CD4-positive, alpha-beta memory T cell (primary cell): ENCODE measurements at regions of chr11 and their contacts with region 1.

Region 1: GRCh38 chr11:86291466-86292262 is 10.4 kb upstream of the HIKESHI start:
- DNase-seq: peak; percentile 49 to 62 (median 55)
- H3K4me3 ChIP-seq: no peak overlapping the region
- H3K4me3 Mint-ChIP-seq: no peak overlapping the region
- H3K27ac ChIP-seq: no peak overlapping the region
- H3K27ac Mint-ChIP-seq: peak overlapping the region in 6 of 7 donors; percentile 1 to 78 (median 50)
- H3K4me1 ChIP-seq: peaks cover 60% of the 10 kb centered on the region
- H3K4me1 Mint-ChIP-seq: peaks cover 22 to 50% (median 34%) of the 10 kb centered on the region in 4 donors
- H3K27me3 ChIP-seq: no peaks in the 10 kb centered on the region
- H3K27me3 Mint-ChIP-seq: no peaks in the 10 kb centered on the region

Region 2: DNA sequence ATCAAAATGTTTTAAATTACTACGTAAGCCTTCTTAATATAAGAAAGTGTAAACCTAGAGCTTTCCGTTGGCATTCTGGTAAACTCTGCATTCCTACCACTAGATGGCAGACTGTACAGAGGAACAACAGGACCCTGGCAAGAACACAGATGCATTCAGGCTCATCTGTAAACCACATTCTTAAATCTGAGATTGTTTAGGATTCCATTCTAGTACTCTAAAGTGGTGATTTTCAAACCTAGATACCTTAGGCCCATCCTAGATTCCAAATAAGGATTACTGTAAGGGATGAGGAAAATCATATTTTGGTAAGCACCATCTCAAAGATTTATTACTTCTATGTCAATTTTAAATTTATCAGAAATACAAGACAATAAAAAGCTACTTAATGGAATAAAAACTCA is 249.7 kb before region 1 on chr11:
- CTCF ChIA-PET with region 1: interaction called, 19 read pairs
- POLR2A ChIA-PET with region 1: interaction called, 3 read pairs
- intact Hi-C with region 1: loop called (anchors 2 kb)
- DNase-seq: peak; percentile 72 to 76 (median 74)
- H3K4me3 ChIP-seq: no peak overlapping the region
- H3K4me3 Mint-ChIP-seq: peak overlapping the region in 4 of 8 donors; percentile 0 to 35 (median 4)
- H3K27ac ChIP-seq: no peak overlapping the region
- H3K27ac Mint-ChIP-seq: peak overlapping the region; percentile 20 to 84 (median 64)
- H3K4me1 ChIP-seq: peaks cover 58% of the 10 kb centered on the region
- H3K4me1 Mint-ChIP-seq: peaks cover 49 to 73% (median 62%) of the 10 kb centered on the region in 4 donors
- H3K27me3 ChIP-seq: no peaks in the 10 kb centered on the region
- H3K27me3 Mint-ChIP-seq: no peaks in the 10 kb centered on the region

Region 3: DNA sequence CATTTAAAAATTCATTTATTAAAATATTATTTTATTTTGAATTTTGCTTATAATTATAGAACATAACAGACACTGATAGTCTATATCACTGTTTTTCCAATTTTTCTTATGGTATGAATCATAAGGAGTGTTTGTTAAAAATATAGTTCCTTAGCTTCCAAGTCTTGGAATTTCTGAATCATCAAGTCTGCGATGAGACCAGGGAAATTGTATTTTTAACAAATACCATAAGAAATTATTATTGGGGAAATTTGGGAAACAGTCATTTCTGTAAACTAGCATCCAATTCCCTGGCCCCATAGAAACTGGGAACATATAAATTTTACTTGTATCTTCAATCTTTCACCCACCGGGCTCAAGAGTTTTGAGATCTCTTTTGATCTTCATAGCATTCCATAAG is 184.7 kb before region 1 on chr11:
- CTCF ChIA-PET with region 1: no interaction called
- POLR2A ChIA-PET with region 1: no interaction called
- intact Hi-C with region 1: no loop called
- DNase-seq: no peak
- H3K4me3 ChIP-seq: no peak overlapping the region
- H3K4me3 Mint-ChIP-seq: no peak overlapping the region
- H3K27ac ChIP-seq: no peak overlapping the region
- H3K27ac Mint-ChIP-seq: no peak overlapping the region
- H3K4me1 ChIP-seq: no peaks in the 10 kb centered on the region
- H3K4me1 Mint-ChIP-seq: peaks cover 0 to 5% (median 3%) of the 10 kb centered on the region in 4 donors
- H3K27me3 ChIP-seq: no peaks in the 10 kb centered on the region
- H3K27me3 Mint-ChIP-seq: peaks cover 0 to 2% of the 10 kb centered on the region in 2 donors

Region 4: GRCh38 chr11:86523738-86524619 is 232.3 kb after region 1 on chr11:
- CTCF ChIA-PET with region 1: no interaction called
- POLR2A ChIA-PET with region 1: no interaction called
- intact Hi-C with region 1: no loop called
- DNase-seq: no peak
- H3K4me3 ChIP-seq: no peak overlapping the region
- H3K4me3 Mint-ChIP-seq: no peak overlapping the region
- H3K27ac ChIP-seq: no peak overlapping the region
- H3K27ac Mint-ChIP-seq: no peak overlapping the region
- H3K4me1 ChIP-seq: no peaks in the 10 kb centered on the region
- H3K4me1 Mint-ChIP-seq: no peaks in the 10 kb centered on the region
- H3K27me3 ChIP-seq: no peaks in the 10 kb centered on the region
- H3K27me3 Mint-ChIP-seq: peaks cover 0 to 4% of the 10 kb centered on the region in 2 donors